ENCODE measurements at regions of chr16 and their contacts with region 1.

Region 1: GRCh38 chr16:80824718-80825364 is 20.4 kb upstream of the CDYL2 start:
- DNase-seq: no peak
- ATAC-seq: peak; percentile 75 to 79 (median 77)
- H3K4me3 ChIP-seq: no peak overlapping the region
- H3K27ac ChIP-seq: no peak overlapping the region
- H3K4me1 ChIP-seq: no peaks in the 10 kb centered on the region
- H3K27me3 ChIP-seq: no peaks in the 10 kb centered on the region
- CTCF ChIP-seq: peak; percentile 68 to 86 (median 84)
- POLR2A ChIP-seq: no peak

Region 2: DNA sequence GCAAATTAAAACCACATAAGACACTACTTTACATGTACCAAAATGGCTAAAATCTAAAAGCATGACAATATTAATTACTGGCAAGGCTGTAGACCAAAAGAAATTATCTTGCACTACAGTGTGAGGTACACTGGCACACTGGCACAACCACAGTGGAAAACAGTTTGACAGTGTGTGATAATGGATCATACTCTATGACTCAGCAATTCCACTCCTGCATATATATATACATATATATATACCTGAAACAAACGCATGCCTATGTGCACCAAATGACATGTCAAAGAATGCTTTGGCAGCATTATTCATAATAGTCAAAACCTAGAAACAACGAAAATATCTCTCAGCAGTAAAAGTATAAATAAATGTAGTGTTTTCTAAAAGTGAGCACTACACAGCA is 288.6 kb before region 1 on chr16:
- intact Hi-C with region 1: loop called in 1 of 2 experiments (anchors 10 kb)
- DNase-seq: no peak
- ATAC-seq: no peak
- H3K4me3 ChIP-seq: no peak overlapping the region
- H3K27ac ChIP-seq: no peak overlapping the region
- H3K4me1 ChIP-seq: peaks cover 0 to 4% (median 0%) of the 10 kb centered on the region in 4 donors
- H3K27me3 ChIP-seq: no peaks in the 10 kb centered on the region
- CTCF ChIP-seq: no peak
- POLR2A ChIP-seq: no peak

Region 3: GRCh38 chr16:80671281-80671849 is 153.5 kb before region 1 on chr16:
- intact Hi-C with region 1: no loop called
- DNase-seq: no peak
- ATAC-seq: no peak
- H3K4me3 ChIP-seq: no peak overlapping the region
- H3K27ac ChIP-seq: no peak overlapping the region
- H3K4me1 ChIP-seq: no peaks in the 10 kb centered on the region
- H3K27me3 ChIP-seq: no peaks in the 10 kb centered on the region
- CTCF ChIP-seq: no peak
- POLR2A ChIP-seq: no peak

Region 4: GRCh38 chr16:80883159-80883642 is 58.4 kb after region 1 on chr16:
- intact Hi-C with region 1: no loop called
- DNase-seq: peak in 1 of 3 donors; percentile 58
- ATAC-seq: peak; percentile 63 to 82 (median 76)
- H3K4me3 ChIP-seq: no peak overlapping the region
- H3K27ac ChIP-seq: peak overlapping the region in 1 of 3 donors; percentile 69
- H3K4me1 ChIP-seq: peaks cover 0 to 15% (median 2%) of the 10 kb centered on the region in 4 donors
- H3K27me3 ChIP-seq: no peaks in the 10 kb centered on the region
- CTCF ChIP-seq: no peak
- POLR2A ChIP-seq: no peak

Measured in right lobe of liver (tissue), 6 donors.